ENCODE measurements at regions of chr1 and their contacts with region 1.

Region 1: GRCh38 chr1:179002552-179003345 is 22.9 kb upstream of the FAM20B start:
- DNase-seq: peak; percentile 67 to 79 (median 77)
- ATAC-seq: peak; percentile 89 to 93 (median 92)
- H3K4me3 ChIP-seq: peak overlapping the region in 2 of 3 donors; percentile 21 to 39
- H3K27ac ChIP-seq: peak overlapping the region; percentile 55 to 83 (median 74)
- H3K4me1 ChIP-seq: peaks cover 0 to 14% (median 2%) of the 10 kb centered on the region in 4 donors
- H3K27me3 ChIP-seq: no peaks in the 10 kb centered on the region
- CTCF ChIP-seq: peak in 3 of 4 donors; percentile 94 to 98 (median 98)
- POLR2A ChIP-seq: no peak

Region 2: DNA sequence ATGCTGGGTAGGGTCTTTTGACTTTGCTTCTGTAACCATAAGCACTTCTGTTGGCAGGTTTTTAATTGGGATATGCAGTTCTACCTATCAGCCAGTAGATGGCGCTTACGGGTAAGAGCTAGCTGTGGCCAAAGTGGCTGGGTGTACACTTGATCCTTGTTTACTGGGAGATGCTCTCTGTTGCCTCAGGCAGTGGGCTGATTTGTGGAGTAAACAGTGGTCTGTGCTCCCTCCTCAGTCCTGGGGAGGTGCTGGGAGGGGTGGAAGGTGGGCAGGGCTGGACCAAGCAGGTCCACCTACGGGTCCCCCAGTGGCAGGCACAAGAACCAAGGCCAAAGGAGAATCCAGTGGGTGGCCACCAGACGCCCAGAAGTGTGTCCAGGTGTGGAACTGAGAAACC is 234.3 kb before region 1 on chr1:
- intact Hi-C with region 1: loop called (anchors 5 to 10 kb)
- DNase-seq: no peak
- ATAC-seq: peak; percentile 73 to 88 (median 82)
- H3K4me3 ChIP-seq: no peak overlapping the region
- H3K27ac ChIP-seq: no peak overlapping the region
- H3K4me1 ChIP-seq: no peaks in the 10 kb centered on the region
- H3K27me3 ChIP-seq: no peaks in the 10 kb centered on the region
- CTCF ChIP-seq: peak; percentile 60 to 79 (median 70)
- POLR2A ChIP-seq: no peak

Region 3: GRCh38 chr1:178774263-178774662 is 228.5 kb before region 1 on chr1:
- intact Hi-C with region 1: loop called (anchors 5 to 10 kb)
- DNase-seq: no peak
- ATAC-seq: peak in 3 of 4 donors; percentile 33 to 45 (median 34)
- H3K4me3 ChIP-seq: no peak overlapping the region
- H3K27ac ChIP-seq: no peak overlapping the region
- H3K4me1 ChIP-seq: peaks cover 0 to 12% (median 0%) of the 10 kb centered on the region in 4 donors
- H3K27me3 ChIP-seq: no peaks in the 10 kb centered on the region
- CTCF ChIP-seq: peak; percentile 34 to 51 (median 46)
- POLR2A ChIP-seq: no peak

Region 4: GRCh38 chr1:179091691-179092165 is 89.0 kb after region 1 on chr1:
- intact Hi-C with region 1: no loop called
- DNase-seq: peak; percentile 87 to 97 (median 96)
- ATAC-seq: peak; percentile 79 to 86 (median 82)
- H3K4me3 ChIP-seq: no peak overlapping the region
- H3K27ac ChIP-seq: peak overlapping the region; percentile 34 to 64 (median 51)
- H3K4me1 ChIP-seq: peaks cover 0 to 63% (median 34%) of the 10 kb centered on the region in 4 donors
- H3K27me3 ChIP-seq: no peaks in the 10 kb centered on the region
- CTCF ChIP-seq: no peak
- POLR2A ChIP-seq: no peak